ENCODE measurements at regions of chr1 and their contacts with region 1.

Region 1: GRCh38 chr1:35030756-35031446 is 844 bp downstream of the ZMYM6 start:
- DNase-seq: peak; percentile 71
- ATAC-seq: peak; percentile 68
- H3K4me3 Mint-ChIP-seq: peak overlapping the region; percentile 98
- H3K27ac Mint-ChIP-seq: peak overlapping the region; percentile 95
- H3K4me1 Mint-ChIP-seq: peaks cover 25% of the 10 kb centered on the region
- H3K27me3 Mint-ChIP-seq: no peaks in the 10 kb centered on the region
- CTCF ChIP-seq: no peak

Region 2: DNA sequence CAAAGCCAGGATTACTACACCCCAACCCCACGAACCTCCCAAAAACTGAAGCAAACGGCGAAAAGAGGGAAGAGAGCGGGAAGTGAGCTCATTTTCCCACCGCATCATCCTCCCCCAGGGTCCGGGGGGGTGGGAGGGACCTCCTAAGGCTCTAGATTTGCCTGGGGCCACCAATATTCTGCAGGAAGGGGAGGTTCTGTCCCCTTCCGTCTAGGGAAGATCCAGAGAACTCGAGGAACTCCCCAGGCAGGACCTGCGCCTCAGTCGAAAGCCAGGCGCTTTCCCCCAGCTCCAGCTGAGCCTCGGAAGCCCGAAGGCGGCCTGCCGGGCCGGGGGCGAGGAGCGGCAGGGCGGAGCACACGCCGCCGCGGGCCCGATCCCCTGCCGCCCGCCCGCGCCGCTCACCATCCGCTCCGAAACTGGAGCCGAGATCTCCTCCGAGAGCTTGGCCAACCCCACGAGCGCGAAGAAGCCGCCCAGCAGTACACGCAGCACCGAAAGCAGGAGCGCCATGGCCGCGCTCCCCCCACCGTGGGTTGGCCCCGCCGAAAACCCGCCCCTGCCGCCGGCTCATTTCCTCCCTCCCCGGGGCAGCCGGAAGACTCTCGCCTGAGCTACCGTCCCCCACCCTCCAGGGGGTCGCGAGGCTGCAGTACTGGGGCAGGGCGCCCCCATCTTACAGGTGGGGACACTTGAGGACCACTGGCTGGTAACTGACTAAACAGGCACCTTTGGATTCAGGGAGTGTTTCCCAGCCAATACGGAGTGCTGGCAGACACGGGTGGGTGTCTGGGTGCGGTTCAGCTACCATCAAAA is 45.9 kb before region 1 on chr1 and contains the start of gene TMEM35B:
- CTCF ChIA-PET with region 1: interaction called, 9 read pairs
- POLR2A ChIA-PET with region 1: interaction called, 13 read pairs
- intact Hi-C with region 1: no loop called
- DNase-seq: peak; percentile 82
- ATAC-seq: peak; percentile 94
- H3K4me3 Mint-ChIP-seq: peak within 1 kb of the TSS; percentile 98
- H3K27ac Mint-ChIP-seq: peak within 1 kb of the TSS; percentile 98
- H3K4me1 Mint-ChIP-seq: peaks cover 48% of the 10 kb centered on the region
- H3K27me3 Mint-ChIP-seq: no peaks in the 10 kb centered on the region
- CTCF ChIP-seq: peak; percentile 29
- total RNA-seq, gene TMEM35B: 19.4 to 19.5 TPM

Region 3: DNA sequence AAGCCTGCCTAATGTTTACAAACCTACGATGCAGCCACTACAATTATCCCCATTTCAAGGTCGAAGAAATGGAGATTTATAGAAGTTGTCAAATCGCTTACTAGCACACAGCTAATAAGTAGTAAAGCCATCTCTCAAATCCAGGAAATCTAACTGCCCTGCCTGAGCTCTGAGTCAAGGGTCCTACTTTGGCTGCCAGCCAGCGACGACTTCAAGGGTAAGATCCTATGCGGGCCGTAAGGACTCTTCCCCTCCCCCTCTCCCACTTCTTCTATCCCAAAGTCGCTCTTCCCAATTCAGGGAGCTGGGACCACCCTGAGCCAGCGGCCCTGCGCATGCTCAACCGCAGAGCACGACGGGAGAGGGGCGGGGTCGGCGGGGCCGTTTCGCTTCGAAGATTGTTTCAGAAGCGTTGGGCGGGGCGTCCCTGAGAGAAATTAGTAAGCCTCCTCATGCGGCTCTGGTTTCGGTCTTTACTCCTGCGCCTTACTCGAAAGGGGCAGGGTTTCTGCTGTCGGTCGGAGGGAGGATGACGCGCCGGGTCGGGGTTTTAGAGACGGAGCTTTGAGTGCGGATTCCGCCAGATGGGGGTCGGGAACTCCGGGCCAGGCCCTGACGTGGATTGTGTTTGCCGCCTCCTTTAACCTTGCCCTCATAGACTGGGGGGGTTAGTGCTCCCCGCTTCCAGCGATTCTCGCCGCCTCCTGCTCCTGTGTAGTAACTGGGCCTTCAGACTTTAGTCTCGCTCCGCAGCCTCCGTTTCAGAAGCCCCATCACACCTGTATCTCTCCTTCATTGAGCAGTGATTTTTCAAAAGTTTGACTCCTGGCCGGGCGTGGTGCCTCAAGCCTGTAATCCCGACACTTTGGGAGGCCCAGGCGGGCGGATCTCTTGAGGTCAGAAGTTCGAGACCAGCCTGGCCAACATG is 48.4 kb after region 1 on chr1 and contains the start of gene ZMYM1:
- CTCF ChIA-PET with region 1: interaction called, 3 read pairs
- POLR2A ChIA-PET with region 1: interaction called, 10 read pairs
- intact Hi-C with region 1: loop called (anchors 5 kb)
- DNase-seq: peak; percentile 97
- ATAC-seq: peak; percentile 98
- H3K4me3 Mint-ChIP-seq: peak within 1 kb of the TSS; percentile 83
- H3K27ac Mint-ChIP-seq: peak within 1 kb of the TSS; percentile 93
- H3K4me1 Mint-ChIP-seq: peaks cover 30% of the 10 kb centered on the region
- H3K27me3 Mint-ChIP-seq: peaks cover 4% of the 10 kb centered on the region
- CTCF ChIP-seq: no peak
- total RNA-seq, gene ZMYM1: 6.8 to 8.9 TPM

Measured in activated CD8-positive, alpha-beta T cell treated with anti-CD3 and anti-CD28 coated beads for 36 hours (primary cell).